Activated naive CD4-positive, alpha-beta T cell treated with anti-CD3 and anti-CD28 coated beads for 36 hours (primary cell): ENCODE measurements at regions of chr16 and their contacts with region 1.

Region 1: GRCh38 chr16:11114366-11115164 is 141.4 kb downstream of the SOCS1 start:
- DNase-seq: peak; percentile 77
- H3K4me3 Mint-ChIP-seq: peak overlapping the region; percentile 23
- H3K27ac Mint-ChIP-seq: peak overlapping the region; percentile 83
- H3K4me1 Mint-ChIP-seq: peaks cover 33% of the 10 kb centered on the region
- H3K27me3 Mint-ChIP-seq: no peaks in the 10 kb centered on the region

Region 2: DNA sequence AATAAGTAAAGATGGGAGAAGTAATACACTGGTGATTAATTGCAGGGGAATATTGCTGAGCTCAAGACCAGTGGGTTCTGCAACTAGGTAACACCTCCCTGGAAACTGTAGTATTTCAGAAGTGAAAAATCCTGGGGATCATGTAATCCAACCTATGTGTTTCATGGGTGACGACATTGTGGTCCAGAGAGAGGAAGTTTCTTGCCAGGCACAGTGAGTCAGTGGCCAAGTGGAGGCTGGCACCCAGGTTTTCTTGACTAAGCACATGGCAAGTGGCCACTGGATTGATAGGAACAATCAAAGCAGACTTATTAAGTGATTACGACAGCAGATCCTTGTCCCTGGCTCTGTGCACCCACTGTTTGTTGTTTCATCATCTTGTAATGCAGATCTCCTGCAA is 252.1 kb before region 1 on chr16:
- CTCF ChIA-PET with region 1: no interaction called
- intact Hi-C with region 1: no loop called
- DNase-seq: no peak
- H3K4me3 Mint-ChIP-seq: no peak overlapping the region
- H3K27ac Mint-ChIP-seq: no peak overlapping the region
- H3K4me1 Mint-ChIP-seq: no peaks in the 10 kb centered on the region
- H3K27me3 Mint-ChIP-seq: peaks cover 12% of the 10 kb centered on the region

Region 3: DNA sequence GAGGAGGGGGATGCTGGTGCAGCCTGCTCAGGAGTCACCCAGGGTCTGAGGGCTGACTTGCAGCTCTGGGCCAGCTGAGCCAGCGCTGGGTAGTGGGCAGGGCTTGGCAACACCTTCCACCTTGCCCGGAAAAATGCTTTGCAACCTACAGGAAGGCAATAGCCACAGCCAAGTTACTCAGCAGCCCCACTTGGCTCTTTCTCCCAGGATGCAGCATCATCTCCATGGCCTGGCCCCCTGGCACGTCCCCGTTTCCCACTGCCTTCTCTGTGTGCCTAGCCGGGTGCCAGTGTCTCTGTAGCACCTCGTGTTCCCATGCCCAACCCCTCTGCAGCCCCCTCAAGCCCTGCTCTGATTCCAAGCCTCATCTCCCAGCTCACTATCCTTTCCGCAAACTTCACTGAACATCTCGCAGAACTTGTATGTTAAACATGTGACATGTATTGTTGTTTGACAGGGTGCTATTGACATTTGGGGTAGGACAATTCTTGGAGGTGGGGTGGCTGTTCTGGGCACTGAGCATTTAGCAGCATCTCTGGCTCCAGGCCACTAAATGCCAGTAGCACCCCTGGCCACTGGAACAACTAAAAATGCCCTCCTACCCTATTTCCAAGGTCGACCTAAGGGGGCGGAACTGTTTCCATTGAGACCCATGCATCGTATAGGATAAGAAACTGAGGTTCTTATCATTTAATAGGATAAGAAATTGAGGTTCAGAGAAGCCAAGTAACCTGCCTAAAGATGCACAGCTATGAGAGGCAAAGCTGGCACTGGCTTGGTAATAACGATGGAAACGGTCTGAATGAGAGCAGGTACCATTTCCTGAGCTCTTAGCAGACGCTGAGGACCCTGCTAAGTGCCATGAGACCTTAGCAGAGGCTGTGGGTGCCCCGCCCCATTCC is 184.5 kb before region 1 on chr16:
- CTCF ChIA-PET with region 1: no interaction called
- intact Hi-C with region 1: no loop called
- DNase-seq: no peak
- H3K4me3 Mint-ChIP-seq: no peak overlapping the region
- H3K27ac Mint-ChIP-seq: no peak overlapping the region
- H3K4me1 Mint-ChIP-seq: peaks cover 17% of the 10 kb centered on the region
- H3K27me3 Mint-ChIP-seq: no peaks in the 10 kb centered on the region

Region 4: GRCh38 chr16:11051879-11052808 is 62.4 kb before region 1 on chr16:
- CTCF ChIA-PET with region 1: no interaction called
- intact Hi-C with region 1: loop called (anchors 2 kb)
- DNase-seq: peak; percentile 71
- H3K4me3 Mint-ChIP-seq: no peak overlapping the region
- H3K27ac Mint-ChIP-seq: peak overlapping the region; percentile 54
- H3K4me1 Mint-ChIP-seq: peaks cover 31% of the 10 kb centered on the region
- H3K27me3 Mint-ChIP-seq: no peaks in the 10 kb centered on the region

Region 5: DNA sequence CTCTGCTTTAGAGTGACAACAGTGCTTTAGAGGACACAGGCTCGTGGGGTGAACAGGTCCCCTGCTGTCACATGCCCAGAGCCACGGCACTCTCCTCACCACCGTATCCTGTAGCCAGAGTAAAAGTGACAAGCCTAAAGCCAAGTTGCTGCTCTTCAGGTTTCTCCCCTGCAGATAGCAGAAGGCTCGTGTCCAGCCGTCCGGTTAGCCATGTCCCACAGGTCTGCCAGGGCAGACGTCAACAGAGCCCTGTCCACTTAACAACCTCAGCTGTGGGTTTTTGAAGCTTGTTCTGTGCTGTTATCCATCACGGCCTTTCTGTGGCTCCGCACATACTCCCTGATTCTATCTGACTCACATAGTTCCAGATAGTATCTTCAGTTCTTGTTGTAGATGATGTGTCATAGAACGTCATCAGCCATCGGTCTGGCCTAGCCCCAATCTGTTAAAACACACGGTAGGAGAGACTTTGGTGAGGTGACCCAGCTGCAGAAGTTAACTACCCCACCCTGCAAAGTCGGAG is 40.8 kb after region 1 on chr16:
- CTCF ChIA-PET with region 1: no interaction called
- intact Hi-C with region 1: no loop called
- DNase-seq: no peak
- H3K4me3 Mint-ChIP-seq: no peak overlapping the region
- H3K27ac Mint-ChIP-seq: no peak overlapping the region
- H3K4me1 Mint-ChIP-seq: peaks cover 5% of the 10 kb centered on the region
- H3K27me3 Mint-ChIP-seq: no peaks in the 10 kb centered on the region

Region 6: DNA sequence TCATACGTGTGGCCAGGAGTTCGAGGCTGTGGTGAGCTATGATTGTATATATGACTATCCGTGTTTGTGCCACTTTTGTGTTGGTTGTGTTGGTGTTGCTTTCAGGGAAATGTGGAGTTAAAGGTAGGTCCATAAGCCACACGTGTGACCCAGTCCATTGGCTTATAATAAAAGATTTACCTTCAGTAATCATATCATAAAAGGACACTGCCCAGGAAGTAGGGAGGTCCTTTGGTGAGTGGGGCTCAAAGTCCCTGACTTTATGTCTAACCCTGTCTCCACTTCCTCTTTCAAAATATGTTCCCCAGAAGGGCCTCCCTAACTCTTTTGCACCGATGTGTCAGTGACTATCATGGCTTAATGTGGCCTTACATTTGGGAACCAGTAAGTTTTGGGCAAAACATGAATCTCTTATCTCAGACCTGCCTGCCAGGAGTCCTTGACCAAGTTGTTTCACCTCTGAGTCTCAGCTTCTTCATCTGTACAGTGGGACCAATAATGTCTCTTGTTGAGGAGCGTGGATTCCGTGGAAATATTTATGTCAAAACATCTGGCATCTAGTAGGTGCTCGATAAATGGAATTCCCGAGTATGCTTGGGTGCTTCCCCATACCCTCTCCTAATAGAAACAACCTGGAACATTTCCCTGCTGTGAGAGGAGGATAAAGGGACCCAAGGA is 149.7 kb after region 1 on chr16:
- CTCF ChIA-PET with region 1: no interaction called
- intact Hi-C with region 1: no loop called
- DNase-seq: no peak
- H3K4me3 Mint-ChIP-seq: peak overlapping the region; percentile 29
- H3K27ac Mint-ChIP-seq: peak overlapping the region; percentile 90
- H3K4me1 Mint-ChIP-seq: peaks cover 28% of the 10 kb centered on the region
- H3K27me3 Mint-ChIP-seq: no peaks in the 10 kb centered on the region